Right ventricle myocardium superior (tissue), 1 donor: ENCODE measurements at regions of chr17 and their contacts with region 1.

Region 1: DNA sequence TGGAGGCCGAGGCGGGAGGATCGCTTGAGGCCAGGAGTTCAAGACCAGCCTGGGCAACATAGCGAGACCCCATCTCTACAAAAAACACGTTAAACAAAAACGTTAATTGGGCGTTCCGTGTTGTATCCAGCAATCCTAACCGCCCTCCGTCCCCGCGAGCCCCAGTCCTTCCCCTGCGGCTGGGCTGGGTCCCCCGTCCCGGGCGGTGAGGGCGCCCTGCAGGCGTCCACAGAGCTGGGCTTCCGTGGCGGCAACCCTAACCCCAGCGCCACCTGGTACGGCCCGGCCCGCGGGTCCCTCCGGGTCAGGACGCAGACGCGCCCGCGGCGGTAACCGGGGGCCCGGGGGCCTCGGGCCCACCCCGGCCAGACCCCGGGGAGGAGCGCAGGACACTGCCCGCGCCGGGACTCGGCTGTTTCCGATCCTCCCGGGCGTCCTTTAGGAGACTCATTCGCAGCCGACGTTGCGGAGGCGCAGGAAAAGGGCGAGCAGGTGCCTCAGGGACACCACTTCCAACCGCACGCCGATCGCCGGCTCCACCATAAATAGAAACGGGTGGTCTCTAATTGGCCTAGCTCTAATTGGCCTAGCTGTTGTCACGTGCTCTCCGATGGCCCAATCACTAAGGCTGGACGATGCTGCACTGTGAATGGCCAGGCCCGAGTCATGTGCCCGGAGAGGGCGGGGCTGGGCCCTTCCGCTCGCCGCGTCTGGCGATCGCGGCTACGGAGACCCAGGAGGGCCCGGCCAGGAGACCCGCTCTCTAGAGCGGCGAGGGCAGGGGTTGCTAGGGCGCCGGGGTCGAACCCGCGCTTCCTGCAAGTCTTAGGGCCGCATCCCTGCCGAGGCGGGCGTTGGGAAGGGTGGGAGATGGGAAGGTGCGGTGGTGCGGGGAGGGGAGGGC is 19.0 kb upstream of the CSNK1D start:
- DNase-seq: peak; percentile 97
- ATAC-seq: peak; percentile 94

Region 2: DNA sequence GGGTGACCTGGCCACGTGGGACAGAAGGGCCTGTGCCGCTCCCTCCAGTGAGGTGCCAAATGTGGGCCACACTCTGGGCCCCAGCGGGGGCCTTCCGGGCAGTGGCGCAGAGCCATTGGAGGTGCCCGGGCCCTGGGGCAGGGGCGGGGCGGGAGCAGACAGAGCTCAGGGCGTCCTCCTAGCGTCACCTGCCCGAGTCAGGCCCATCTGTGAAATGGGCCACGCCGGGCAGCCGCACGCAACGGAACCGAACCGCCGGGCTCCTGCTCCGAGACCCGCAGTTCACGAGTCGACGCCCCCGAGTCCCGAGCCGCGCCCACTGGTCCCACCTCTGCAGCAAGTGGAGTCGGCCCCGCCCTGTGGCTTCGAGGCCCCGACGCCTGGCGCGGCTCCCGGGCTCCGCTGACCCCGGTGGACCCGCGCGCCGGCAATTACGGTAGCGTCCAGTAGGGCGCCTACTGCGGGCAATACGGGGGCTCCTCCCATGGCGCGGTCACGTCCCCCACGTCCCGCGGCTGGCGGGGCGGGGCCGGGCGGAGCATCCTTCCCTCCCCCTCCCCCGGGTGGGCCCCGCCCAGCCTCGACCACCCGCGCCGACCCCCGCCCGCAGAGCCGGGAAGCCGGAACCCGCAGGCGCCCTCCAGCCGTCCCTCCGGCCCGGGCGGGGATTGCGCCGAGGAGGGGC is 61.7 kb before region 1 on chr17:
- intact Hi-C with region 1: loop called (anchors 10 kb)
- DNase-seq: peak; percentile 95
- ATAC-seq: peak; percentile 85